Vagina (tissue), 2 donors: ENCODE measurements at regions of chr9 and their contacts with region 1.

Region 1: DNA sequence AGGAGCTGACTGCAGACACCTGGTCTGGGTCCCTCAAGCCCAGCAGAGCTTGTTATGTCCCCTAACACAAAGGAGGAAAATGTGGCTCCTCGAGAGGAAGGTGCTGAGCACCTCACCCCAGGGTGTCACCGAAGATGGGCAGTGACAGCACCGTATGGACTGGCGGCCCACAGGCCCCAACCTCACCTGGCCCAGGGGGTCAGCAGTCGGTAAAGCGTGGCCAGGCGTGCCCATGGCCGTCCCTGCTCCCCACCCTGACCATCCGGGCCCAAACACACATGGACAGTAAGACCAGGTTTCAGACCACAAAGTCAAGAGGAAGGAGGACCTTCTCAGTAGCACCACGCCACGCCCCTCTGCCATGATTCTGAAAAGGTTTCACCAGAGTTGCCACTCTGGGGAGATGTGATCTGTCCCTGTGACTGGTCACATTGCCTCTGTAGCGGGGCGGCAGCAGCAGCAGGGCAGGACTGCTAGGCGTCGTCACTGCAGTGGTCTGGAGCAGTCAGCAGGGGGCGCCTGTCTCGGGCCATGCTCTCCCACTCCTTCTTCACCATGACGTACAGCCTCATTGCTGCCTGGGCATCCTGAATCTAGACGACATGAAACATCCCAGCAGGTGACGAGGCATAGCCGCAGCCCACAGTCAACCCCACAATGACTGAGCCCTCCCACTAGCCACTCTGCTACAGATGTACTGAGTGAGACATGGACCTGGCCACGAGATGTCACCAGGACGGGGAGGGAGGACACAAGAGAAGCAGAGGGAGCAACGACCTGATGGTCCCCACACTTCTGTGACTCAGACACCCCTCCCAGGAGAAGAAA is 11.1 kb downstream of the REXO4 start:
- DNase-seq: no peak
- H3K4me3 ChIP-seq: no peak overlapping the region
- H3K27ac ChIP-seq: no peak overlapping the region
- H3K4me1 ChIP-seq: no peaks in the 10 kb centered on the region
- H3K27me3 ChIP-seq: no peaks in the 10 kb centered on the region
- CTCF ChIP-seq: peak; percentile 49 to 81 (median 54)
- POLR2A ChIP-seq: no peak

Region 2: DNA sequence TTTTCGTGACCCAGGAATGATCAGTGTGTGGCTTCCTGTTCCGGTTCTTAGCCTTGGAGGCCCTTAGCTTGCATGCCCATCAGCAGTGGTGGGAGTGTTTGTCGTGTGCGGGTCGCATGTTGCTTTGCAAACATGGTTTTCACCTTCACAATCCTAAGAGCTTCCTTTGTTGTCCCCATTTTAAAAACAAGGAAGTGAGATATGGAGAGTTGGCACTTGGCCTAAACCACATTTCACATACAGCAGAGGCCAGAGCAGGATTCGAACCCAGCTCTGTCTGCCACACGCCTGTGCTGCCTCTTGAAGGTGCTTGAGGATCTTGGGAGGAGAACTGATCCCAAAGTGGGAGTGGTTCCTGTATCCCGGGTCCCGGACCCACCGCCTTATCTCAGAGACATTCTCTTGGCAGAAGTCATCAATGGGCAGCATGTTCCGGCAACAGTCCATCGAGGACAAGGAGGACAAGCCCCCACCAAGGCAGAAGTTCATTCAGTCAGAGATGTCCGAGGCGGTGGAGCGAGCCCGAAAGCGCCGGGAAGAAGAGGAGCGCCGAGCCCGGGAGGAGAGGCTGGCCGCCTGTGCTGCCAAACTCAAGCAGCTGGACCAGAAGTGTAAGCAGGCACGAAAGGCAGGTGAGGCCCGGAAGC is 1942.2 kb before region 1 on chr9:
- intact Hi-C with region 1: no loop called
- DNase-seq: no peak
- H3K4me3 ChIP-seq: no peak overlapping the region
- H3K27ac ChIP-seq: no peak overlapping the region
- H3K4me1 ChIP-seq: no peaks in the 10 kb centered on the region
- H3K27me3 ChIP-seq: no peaks in the 10 kb centered on the region
- CTCF ChIP-seq: no peak
- POLR2A ChIP-seq: no peak

Region 3: DNA sequence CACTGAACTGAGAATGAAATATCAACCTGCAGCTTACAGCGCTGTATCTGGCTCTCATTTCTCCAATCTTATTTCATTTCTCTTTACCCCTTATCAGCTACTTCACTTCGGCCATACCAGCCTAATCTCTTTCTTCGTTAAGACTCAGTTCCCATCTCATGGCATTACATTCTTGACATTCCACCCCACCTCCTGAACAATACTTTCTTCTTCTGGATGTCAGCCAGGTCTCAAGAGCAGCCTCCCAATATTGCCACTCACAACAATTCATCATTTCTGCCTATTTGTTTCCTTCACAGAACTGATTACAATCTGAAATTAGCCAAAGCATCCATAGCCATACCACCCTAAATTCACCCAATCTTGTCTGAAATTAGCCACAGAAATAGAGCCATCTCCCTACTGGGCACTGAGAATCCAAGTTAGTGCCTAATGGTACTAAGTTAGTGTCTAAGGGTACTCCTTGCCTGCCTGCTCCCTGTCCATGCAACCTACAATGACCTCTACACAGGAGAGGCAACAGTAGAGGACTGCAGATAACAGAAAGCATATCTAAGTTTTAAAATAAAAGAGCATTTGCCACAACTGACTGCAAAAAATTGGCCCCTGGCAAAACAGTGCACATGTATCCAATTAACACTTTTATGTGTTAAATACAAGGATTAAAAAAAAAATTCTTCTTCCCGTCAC is 1087.1 kb before region 1 on chr9:
- intact Hi-C with region 1: loop called (anchors 5 kb)
- DNase-seq: no peak
- H3K4me3 ChIP-seq: no peak overlapping the region
- H3K27ac ChIP-seq: no peak overlapping the region
- H3K4me1 ChIP-seq: peaks cover 14% of the 10 kb centered on the region
- H3K27me3 ChIP-seq: no peaks in the 10 kb centered on the region
- CTCF ChIP-seq: no peak
- POLR2A ChIP-seq: no peak

Region 4: GRCh38 chr9:133485361-133486260 is 78.9 kb after region 1 on chr9:
- intact Hi-C with region 1: loop called (anchors 1 kb)
- DNase-seq: no peak
- H3K4me3 ChIP-seq: no peak overlapping the region
- H3K27ac ChIP-seq: no peak overlapping the region
- H3K4me1 ChIP-seq: no peaks in the 10 kb centered on the region
- H3K27me3 ChIP-seq: no peaks in the 10 kb centered on the region
- CTCF ChIP-seq: no peak
- POLR2A ChIP-seq: no peak

Region 5: DNA sequence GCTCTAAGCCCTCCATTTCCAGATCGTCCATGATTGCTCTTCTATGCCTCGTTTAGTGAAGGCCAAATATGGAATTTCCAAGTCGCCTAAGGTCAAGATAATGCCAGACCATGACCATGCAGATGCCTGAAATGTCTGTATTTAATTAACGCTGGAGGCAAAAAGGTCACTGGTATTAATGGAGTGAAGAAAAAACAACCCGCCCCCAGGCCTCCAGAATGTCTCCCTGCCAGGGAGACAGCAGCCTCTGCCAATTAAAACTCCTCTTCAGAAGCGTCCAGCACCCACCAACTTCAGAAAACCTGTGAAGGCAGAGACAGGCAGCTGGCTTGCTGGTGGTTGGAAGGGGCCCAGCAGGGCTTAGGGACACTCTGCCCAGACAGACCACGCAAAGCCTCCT is 491.0 kb after region 1 on chr9:
- intact Hi-C with region 1: no loop called
- DNase-seq: no peak
- H3K4me3 ChIP-seq: no peak overlapping the region
- H3K27ac ChIP-seq: no peak overlapping the region
- H3K4me1 ChIP-seq: no peaks in the 10 kb centered on the region
- H3K27me3 ChIP-seq: no peaks in the 10 kb centered on the region
- CTCF ChIP-seq: no peak
- POLR2A ChIP-seq: no peak